ENCODE measurements at regions of chr7 and their contacts with region 1.

Region 1: DNA sequence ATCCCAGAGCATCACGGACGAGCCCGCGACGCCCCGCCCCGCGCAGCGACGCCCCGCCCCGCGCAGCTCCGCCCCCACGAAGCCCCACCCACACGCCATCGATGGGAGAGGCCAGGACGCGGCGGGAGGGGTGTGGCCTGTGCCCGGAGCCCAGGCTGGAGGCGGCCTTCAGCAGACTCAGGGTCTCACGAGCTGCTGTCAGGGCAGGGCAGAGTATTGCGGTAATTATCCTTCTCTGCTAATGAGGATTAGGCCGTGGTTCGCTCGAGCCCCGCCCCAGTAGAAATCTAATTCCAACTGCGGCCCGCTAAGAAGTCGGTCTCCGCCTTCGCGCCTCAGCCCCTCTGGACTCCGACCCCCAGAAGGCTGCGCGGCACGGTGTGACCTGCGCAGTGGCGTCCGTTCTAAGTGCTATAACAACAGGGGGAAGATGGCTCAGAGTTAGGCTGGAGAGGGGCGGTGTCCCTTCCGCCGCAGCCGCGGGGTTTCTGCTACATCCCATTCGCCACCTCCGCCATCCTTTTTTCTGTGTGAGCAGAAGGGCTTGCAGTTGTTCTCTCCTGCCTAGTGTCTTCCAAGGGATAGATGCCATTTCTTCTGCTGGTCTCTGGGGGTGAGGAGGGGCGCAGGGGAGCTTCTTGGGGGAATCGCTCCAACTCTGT is 337 bp upstream of the NT5C3A start:
- DNase-seq: peak; percentile 91
- H3K4me3 ChIP-seq: peak overlapping the region; percentile 39 to 92 (median 60)
- H3K27ac ChIP-seq: peak overlapping the region; percentile 84 to 89 (median 89)
- H3K4me1 ChIP-seq: peaks cover 6 to 12% of the 10 kb centered on the region in 2 donors
- H3K27me3 ChIP-seq: no peaks in the 10 kb centered on the region
- CTCF ChIP-seq: no peak
- POLR2A ChIP-seq: peak in 1 of 2 donors; percentile 58

Region 2: GRCh38 chr7:32846701-32847100 is 216.2 kb before region 1 on chr7:
- intact Hi-C with region 1: loop called (anchors 5 kb)
- DNase-seq: peak; percentile 91 to 93
- H3K4me3 ChIP-seq: no peak overlapping the region
- H3K27ac ChIP-seq: no peak overlapping the region
- H3K4me1 ChIP-seq: no peaks in the 10 kb centered on the region
- H3K27me3 ChIP-seq: no peaks in the 10 kb centered on the region
- CTCF ChIP-seq: peak; percentile 75 to 95 (median 88)
- POLR2A ChIP-seq: no peak

Region 3: GRCh38 chr7:32942786-32943653 is 119.9 kb before region 1 on chr7:
- intact Hi-C with region 1: loop called (anchors 5 kb)
- DNase-seq: peak; percentile 76 to 81
- H3K4me3 ChIP-seq: peak overlapping the region; percentile 31 to 71 (median 60)
- H3K27ac ChIP-seq: peak overlapping the region; percentile 70 to 98 (median 80)
- H3K4me1 ChIP-seq: peaks cover 6 to 13% of the 10 kb centered on the region in 2 donors
- H3K27me3 ChIP-seq: no peaks in the 10 kb centered on the region
- CTCF ChIP-seq: peak in 3 of 6 experiments; percentile 60 to 80 (median 66)
- POLR2A ChIP-seq: peak in 1 of 2 donors; percentile 69

Region 4: DNA sequence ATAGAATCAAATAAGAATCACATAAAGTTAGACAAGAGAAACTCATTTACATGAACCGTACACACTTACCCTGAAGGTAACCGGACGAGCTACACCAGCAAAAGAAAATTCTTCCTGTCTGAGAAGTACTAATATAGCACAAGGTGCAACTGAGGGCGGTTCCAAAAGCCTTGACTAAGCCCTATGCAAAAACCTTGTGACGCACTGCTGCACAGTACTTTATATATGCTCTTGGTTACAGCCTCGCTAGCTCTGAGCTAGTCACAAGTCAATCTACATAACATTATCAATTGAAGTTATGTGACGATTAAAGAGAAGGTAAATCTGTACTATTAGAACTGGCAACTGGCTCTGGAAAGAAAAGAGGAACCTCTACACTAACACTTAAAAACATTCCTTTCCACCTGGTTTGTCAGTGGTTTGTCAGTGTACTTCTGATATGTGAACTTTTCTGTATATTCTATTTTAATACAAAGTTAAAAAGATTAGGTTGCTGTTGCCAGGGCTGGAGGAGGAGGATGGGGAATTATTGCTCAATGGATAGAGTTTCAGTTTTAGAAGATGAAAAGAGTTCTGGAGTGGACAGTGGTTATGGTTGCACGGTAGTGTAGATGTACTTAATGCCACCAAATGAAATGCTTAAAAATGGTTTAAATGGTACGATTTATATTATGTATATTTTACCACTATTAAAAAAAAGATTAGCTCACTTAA is 22.0 kb before region 1 on chr7:
- intact Hi-C with region 1: no loop called
- DNase-seq: peak; percentile 39 to 51
- H3K4me3 ChIP-seq: peak overlapping the region in 2 of 3 donors; percentile 16 to 42
- H3K27ac ChIP-seq: peak overlapping the region; percentile 48 to 67 (median 48)
- H3K4me1 ChIP-seq: peaks cover 38 to 40% of the 10 kb centered on the region in 2 donors
- H3K27me3 ChIP-seq: no peaks in the 10 kb centered on the region
- CTCF ChIP-seq: no peak
- POLR2A ChIP-seq: peak in 1 of 2 donors; percentile 74

Region 5: DNA sequence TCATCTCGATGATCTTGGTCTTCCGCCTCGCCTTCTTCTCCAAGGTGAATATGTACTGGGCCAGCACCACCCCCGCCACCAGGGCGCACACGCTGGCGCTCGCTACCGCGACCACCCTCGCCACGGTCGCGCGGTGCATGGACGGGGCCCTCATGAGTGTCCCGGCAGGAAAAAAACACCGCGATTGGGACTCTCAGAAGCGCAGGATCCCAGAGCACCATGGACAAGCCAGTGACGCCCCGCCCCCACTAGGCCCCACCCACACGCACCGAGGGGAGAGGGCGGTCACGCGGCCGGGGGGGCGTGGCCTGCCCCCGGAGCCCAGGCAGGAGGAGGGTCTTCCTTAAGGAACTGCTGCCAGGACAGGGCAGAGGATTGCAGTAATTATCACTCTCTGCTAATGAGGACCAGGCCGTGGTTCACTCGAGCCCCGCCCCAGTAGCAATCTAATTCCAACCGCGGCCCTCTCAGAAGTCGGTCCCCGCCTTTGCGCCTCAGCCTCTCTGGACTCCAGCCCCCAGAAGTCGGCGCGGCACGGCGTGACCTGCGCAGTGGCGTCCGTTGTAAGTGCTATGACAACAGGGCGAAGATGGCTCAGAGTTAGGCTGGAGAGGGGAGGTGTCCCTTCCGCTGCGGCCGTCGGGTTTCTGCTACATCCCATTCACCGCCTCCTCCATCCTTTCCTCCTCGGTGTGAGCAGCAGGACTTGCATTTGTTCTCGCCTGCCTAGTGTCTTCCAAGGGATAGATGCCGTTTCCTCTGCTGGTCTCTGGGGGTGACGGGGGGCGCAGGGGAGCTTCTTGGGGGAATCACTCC is 66.3 kb after region 1 on chr7 and contains the start of gene BBS9:
- intact Hi-C with region 1: loop called (anchors 5 kb)
- DNase-seq: peak; percentile 93 to 94
- H3K4me3 ChIP-seq: peak within 1 kb of the TSS; percentile 45 to 72 (median 50)
- H3K27ac ChIP-seq: peak within 1 kb of the TSS; percentile 68 to 84 (median 82)
- H3K4me1 ChIP-seq: peaks cover 4% of the 10 kb centered on the region in 2 donors
- H3K27me3 ChIP-seq: no peaks in the 10 kb centered on the region
- CTCF ChIP-seq: peak in 2 of 6 experiments; percentile 3 to 11
- POLR2A ChIP-seq: peak; percentile 39 to 75
- total RNA-seq, gene BBS9: 59.2 to 84.8 (median 73.1) TPM